ENCODE measurements at regions of chrX and their contacts with region 1.

Region 1: DNA sequence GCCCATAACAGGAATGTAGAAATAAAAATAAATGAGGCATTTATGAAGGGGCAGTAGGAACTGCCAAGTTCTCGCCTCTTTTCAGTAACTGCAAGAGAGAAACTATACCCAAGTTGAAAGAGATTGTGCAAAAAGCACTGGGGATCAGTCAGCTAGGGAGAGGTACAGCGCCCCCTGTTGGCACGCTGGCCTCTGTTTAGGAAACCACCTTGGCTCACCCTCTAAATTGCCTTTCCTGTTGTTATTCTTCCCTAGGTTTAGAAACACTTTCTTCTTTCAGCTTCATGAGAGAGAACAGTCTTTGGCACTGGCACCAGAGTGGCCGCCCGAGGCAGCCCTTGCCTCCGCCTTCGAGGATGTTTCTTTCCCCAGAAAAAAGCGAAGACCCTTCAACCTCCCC is 348.5 kb downstream of the MID1IP1 start:
- DNase-seq: peak; percentile 72
- ATAC-seq: no peak
- H3K4me3 ChIP-seq: no peak overlapping the region
- H3K4me3 Mint-ChIP-seq: no peak overlapping the region
- H3K27ac ChIP-seq: no peak overlapping the region
- H3K27ac Mint-ChIP-seq: no peak overlapping the region
- H3K4me1 ChIP-seq: peaks cover 35 to 46% of the 10 kb centered on the region in 2 donors
- H3K4me1 Mint-ChIP-seq: peaks cover 52% of the 10 kb centered on the region
- H3K27me3 ChIP-seq: no peaks in the 10 kb centered on the region
- H3K27me3 Mint-ChIP-seq: no peaks in the 10 kb centered on the region
- CTCF ChIP-seq: peak; percentile 66

Region 2: DNA sequence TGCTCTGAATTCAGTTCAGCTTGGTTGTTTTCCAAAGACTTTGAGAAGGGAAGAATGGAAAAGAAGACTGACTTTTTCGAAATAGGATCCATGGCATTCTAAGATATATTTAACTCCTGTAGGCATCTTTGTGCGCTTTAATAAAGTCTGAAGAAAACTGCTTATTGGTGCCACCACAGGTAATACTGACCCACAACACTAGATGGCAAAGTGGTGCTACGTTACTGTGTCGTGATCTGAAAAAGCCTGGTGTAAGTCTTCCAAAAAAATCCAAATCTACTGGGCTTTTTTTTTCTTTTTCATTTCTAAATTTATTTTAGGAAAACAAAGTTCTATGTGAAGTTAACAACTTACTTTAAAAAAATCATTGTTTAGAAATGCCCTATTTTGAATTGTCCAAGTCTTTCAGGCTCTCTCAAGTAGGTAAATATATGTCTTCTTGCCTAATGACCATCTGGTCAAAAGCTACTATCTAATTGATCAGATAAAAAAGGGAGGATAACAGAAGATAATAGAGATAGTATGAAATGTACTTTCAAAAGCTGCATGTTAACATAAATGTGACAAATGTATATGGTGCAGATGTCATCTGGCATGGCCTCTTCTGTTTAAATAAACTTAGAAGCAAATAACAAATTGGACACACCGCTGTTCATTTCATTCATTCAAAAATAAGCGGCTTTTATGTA is 395.5 kb before region 1 on chrX:
- CTCF ChIA-PET with region 1: interaction called, 5 read pairs
- POLR2A ChIA-PET with region 1: no interaction called
- intact Hi-C with region 1: loop called (anchors 1 kb)
- DNase-seq: peak; percentile 53
- ATAC-seq: peak; percentile 33
- H3K4me3 ChIP-seq: no peak overlapping the region
- H3K4me3 Mint-ChIP-seq: no peak overlapping the region
- H3K27ac ChIP-seq: no peak overlapping the region
- H3K27ac Mint-ChIP-seq: no peak overlapping the region
- H3K4me1 ChIP-seq: no peaks in the 10 kb centered on the region
- H3K4me1 Mint-ChIP-seq: no peaks in the 10 kb centered on the region
- H3K27me3 ChIP-seq: no peaks in the 10 kb centered on the region
- H3K27me3 Mint-ChIP-seq: peaks cover 9% of the 10 kb centered on the region
- CTCF ChIP-seq: peak; percentile 71

Region 3: DNA sequence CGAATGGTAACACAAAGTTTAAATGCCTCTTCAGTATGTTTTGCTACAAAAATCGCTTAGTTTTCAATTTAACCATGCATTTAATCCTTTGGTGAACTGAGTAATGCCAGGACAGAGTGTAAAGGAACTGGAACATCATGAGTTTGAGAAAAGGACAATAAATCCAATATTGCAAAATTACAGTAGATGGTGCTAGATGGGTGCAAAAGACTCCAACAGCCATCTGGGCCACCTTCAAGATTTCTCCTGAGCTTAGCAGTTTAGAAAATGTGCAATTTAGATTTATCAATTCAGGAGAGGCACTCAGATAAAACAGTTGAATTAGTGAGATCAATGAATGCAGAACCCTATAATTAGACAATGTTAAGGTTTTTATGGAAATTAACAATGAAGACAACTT is 381.7 kb before region 1 on chrX:
- CTCF ChIA-PET with region 1: interaction called, 22 read pairs
- POLR2A ChIA-PET with region 1: no interaction called
- intact Hi-C with region 1: loop called (anchors 1 kb)
- DNase-seq: peak; percentile 28
- ATAC-seq: no peak
- H3K4me3 ChIP-seq: no peak overlapping the region
- H3K4me3 Mint-ChIP-seq: no peak overlapping the region
- H3K27ac ChIP-seq: no peak overlapping the region
- H3K27ac Mint-ChIP-seq: no peak overlapping the region
- H3K4me1 ChIP-seq: no peaks in the 10 kb centered on the region
- H3K4me1 Mint-ChIP-seq: no peaks in the 10 kb centered on the region
- H3K27me3 ChIP-seq: no peaks in the 10 kb centered on the region
- H3K27me3 Mint-ChIP-seq: peaks cover 4% of the 10 kb centered on the region
- CTCF ChIP-seq: peak; percentile 53

Region 4: GRCh38 chrX:38803586-38804431 is 346.0 kb before region 1 on chrX:
- CTCF ChIA-PET with region 1: interaction called, 4 read pairs
- POLR2A ChIA-PET with region 1: no interaction called
- intact Hi-C with region 1: loop called (anchors 2 kb)
- DNase-seq: peak; percentile 56
- ATAC-seq: peak; percentile 68
- H3K4me3 ChIP-seq: peak overlapping the region; percentile 41 to 69 (median 64)
- H3K4me3 Mint-ChIP-seq: peak overlapping the region; percentile 91
- H3K27ac ChIP-seq: peak overlapping the region; percentile 78 to 82
- H3K27ac Mint-ChIP-seq: peak overlapping the region; percentile 88
- H3K4me1 ChIP-seq: peaks cover 14 to 32% of the 10 kb centered on the region in 2 donors
- H3K4me1 Mint-ChIP-seq: peaks cover 35% of the 10 kb centered on the region
- H3K27me3 ChIP-seq: peaks cover 0 to 2% (median 0%) of the 10 kb centered on the region in 4 experiments
- H3K27me3 Mint-ChIP-seq: peaks cover 3% of the 10 kb centered on the region
- CTCF ChIP-seq: no peak

Region 5: GRCh38 chrX:39133971-39134370 is 15.8 kb before region 1 on chrX:
- CTCF ChIA-PET with region 1: interaction called, 74 read pairs
- POLR2A ChIA-PET with region 1: interaction called, 5 read pairs
- intact Hi-C with region 1: loop called (anchors 1 kb)
- DNase-seq: peak; percentile 65
- ATAC-seq: peak; percentile 84
- H3K4me3 ChIP-seq: no peak overlapping the region
- H3K4me3 Mint-ChIP-seq: no peak overlapping the region
- H3K27ac ChIP-seq: no peak overlapping the region
- H3K27ac Mint-ChIP-seq: no peak overlapping the region
- H3K4me1 ChIP-seq: peaks cover 3 to 14% of the 10 kb centered on the region in 2 donors
- H3K4me1 Mint-ChIP-seq: peaks cover 29% of the 10 kb centered on the region
- H3K27me3 ChIP-seq: no peaks in the 10 kb centered on the region
- H3K27me3 Mint-ChIP-seq: no peaks in the 10 kb centered on the region
- CTCF ChIP-seq: peak; percentile 58

Region 6: DNA sequence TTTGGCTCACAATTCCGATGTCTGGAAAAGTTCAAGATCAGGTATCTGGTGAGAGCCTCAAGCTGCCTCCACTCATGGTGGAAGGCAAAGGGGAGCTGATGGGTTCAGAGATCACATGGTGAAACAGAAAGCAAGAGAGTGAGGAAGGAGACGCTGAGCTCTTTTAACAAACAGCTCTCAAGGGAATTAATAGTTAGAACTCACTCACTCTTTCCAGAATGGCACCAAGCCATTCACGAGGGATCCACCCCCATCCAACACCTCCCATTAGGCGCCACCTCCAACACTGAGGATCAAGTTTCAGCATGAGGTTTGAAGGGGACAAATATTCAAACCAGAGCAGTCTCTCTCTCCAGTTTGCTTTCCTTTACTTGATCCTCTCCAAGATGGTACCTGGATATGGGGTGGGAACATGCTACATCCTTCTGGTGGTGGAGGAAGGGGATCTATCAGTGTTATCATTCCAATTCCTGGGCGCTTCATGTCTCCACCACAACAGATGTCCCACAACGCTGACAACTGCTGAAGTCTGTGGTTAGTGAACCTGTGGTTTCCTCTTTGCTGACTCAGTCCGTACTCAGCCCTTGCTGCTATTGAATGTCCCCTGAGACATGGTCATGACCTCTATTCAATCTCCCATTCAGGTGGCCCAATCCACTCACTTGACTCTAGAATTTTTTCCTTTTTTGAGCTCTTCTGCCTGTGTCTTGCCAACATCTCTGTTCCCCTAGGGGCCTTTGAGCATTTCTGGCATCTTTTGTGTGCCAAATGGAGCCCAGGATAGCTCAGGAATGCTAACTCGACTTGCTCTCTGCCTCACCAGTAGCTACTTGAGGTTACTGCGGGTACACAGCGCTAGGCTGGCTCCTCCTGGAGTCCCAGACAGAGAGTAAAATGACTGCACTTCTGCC is 46.7 kb after region 1 on chrX:
- CTCF ChIA-PET with region 1: interaction called, 3 read pairs
- POLR2A ChIA-PET with region 1: no interaction called
- intact Hi-C with region 1: loop called (anchors 1 kb)
- DNase-seq: peak; percentile 66
- ATAC-seq: peak; percentile 91
- H3K4me3 ChIP-seq: no peak overlapping the region
- H3K4me3 Mint-ChIP-seq: peak overlapping the region; percentile 72
- H3K27ac ChIP-seq: no peak overlapping the region
- H3K27ac Mint-ChIP-seq: peak overlapping the region; percentile 47
- H3K4me1 ChIP-seq: peaks cover 16 to 23% of the 10 kb centered on the region in 2 donors
- H3K4me1 Mint-ChIP-seq: peaks cover 15% of the 10 kb centered on the region
- H3K27me3 ChIP-seq: peaks cover 0 to 3% (median 0%) of the 10 kb centered on the region in 4 experiments
- H3K27me3 Mint-ChIP-seq: peaks cover 10% of the 10 kb centered on the region
- CTCF ChIP-seq: no peak

Region 7: DNA sequence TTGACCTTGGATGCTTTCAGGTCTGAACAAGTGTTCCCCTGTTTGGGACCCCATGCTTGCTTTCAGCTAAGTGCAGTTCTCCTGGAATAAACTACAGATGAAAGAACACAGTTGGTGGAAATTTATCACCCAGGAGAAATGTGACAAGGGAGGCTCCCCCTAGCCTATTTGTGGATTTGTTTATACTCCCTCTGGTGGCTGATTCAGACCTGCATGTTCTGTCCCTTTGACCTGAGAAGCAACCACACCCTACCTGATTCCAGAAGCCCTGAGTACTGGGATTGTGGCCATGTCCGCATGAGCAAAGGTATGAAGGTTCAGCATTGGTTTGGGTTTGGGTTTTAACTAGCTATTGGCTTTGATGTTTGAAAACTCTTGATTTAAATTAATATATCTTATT is 92.4 kb after region 1 on chrX:
- CTCF ChIA-PET with region 1: interaction called, 4 read pairs
- POLR2A ChIA-PET with region 1: no interaction called
- intact Hi-C with region 1: loop called (anchors 10 kb)
- DNase-seq: peak; percentile 33
- ATAC-seq: no peak
- H3K4me3 ChIP-seq: no peak overlapping the region
- H3K4me3 Mint-ChIP-seq: no peak overlapping the region
- H3K27ac ChIP-seq: no peak overlapping the region
- H3K27ac Mint-ChIP-seq: no peak overlapping the region
- H3K4me1 ChIP-seq: peaks cover 4 to 6% of the 10 kb centered on the region in 2 donors
- H3K4me1 Mint-ChIP-seq: peaks cover 5% of the 10 kb centered on the region
- H3K27me3 ChIP-seq: no peaks in the 10 kb centered on the region
- H3K27me3 Mint-ChIP-seq: no peaks in the 10 kb centered on the region
- CTCF ChIP-seq: peak; percentile 48

Region 8: DNA sequence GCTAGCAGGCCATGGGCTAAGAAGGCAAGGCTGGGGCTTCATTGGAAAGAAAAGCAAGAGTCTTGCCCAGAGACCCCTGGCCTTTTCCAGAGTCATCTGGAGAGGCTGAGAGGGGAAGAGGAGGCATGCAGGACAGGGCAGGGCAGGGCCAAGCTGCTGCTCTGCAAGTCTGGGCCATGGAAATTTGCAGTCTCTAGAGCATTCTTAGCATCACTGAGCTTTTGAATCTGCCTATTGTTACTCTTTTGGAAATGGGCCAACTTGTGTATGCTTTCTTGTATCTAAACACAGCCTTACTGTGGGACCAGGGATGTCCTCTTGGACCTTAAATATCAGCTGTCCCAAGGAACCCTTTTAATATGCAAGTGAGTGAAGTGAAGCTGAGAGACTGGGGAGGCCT is 212.0 kb after region 1 on chrX:
- CTCF ChIA-PET with region 1: no interaction called
- POLR2A ChIA-PET with region 1: no interaction called
- intact Hi-C with region 1: no loop called
- DNase-seq: no peak
- ATAC-seq: no peak
- H3K4me3 ChIP-seq: no peak overlapping the region
- H3K4me3 Mint-ChIP-seq: no peak overlapping the region
- H3K27ac ChIP-seq: no peak overlapping the region
- H3K27ac Mint-ChIP-seq: no peak overlapping the region
- H3K4me1 ChIP-seq: peaks cover 0 to 4% of the 10 kb centered on the region in 2 donors
- H3K4me1 Mint-ChIP-seq: peaks cover 5% of the 10 kb centered on the region
- H3K27me3 ChIP-seq: no peaks in the 10 kb centered on the region
- H3K27me3 Mint-ChIP-seq: peaks cover 7% of the 10 kb centered on the region
- CTCF ChIP-seq: no peak